Ascending aorta (tissue), 2 donors: ENCODE measurements at regions of chr7 and their contacts with region 1.

Region 1: GRCh38 chr7:113698556-113699220 is 220.1 kb downstream of the PPP1R3A start:
- DNase-seq: no peak
- H3K4me3 ChIP-seq: no peak overlapping the region
- H3K27ac ChIP-seq: no peak overlapping the region
- H3K4me1 ChIP-seq: no peaks in the 10 kb centered on the region
- H3K27me3 ChIP-seq: no peaks in the 10 kb centered on the region
- CTCF ChIP-seq: peak; percentile 26 to 75 (median 70)

Region 2: GRCh38 chr7:113015032-113015645 is 683.5 kb before region 1 on chr7:
- intact Hi-C with region 1: loop called (anchors 5 kb)
- DNase-seq: no peak
- H3K4me3 ChIP-seq: no peak overlapping the region
- H3K27ac ChIP-seq: no peak overlapping the region
- H3K4me1 ChIP-seq: no peaks in the 10 kb centered on the region
- H3K27me3 ChIP-seq: no peaks in the 10 kb centered on the region
- CTCF ChIP-seq: peak; percentile 5 to 34 (median 23)

Region 3: DNA sequence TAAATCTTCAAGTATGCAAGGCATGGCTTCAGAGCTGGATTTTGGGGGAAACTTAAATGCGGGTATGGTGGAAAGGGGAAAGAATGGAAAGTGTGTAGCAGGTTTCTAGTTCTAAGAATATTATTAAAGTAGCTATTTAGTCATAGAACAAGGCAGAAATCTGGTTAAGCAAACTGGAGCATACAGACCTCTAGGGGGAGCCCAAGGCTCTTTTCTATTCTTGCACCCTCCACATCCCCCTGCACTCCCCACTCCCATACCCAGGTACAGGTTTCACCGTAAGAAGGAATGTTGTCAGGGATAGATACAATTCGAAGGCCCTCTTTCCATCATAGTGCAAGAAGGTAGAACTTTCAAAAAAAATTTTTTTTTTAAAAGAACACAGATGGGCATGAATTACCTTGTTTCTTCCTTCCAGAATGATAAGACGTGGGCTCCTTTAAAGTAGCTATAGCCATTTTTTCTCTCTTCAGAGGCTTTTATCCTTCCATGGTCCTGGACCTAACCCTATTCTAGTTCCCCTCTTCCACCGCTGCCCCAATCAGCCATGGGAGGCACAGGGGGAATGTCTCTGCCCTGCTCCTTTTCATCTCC is 538.8 kb before region 1 on chr7:
- intact Hi-C with region 1: loop called (anchors 10 kb)
- DNase-seq: no peak
- H3K4me3 ChIP-seq: no peak overlapping the region
- H3K27ac ChIP-seq: no peak overlapping the region
- H3K4me1 ChIP-seq: no peaks in the 10 kb centered on the region
- H3K27me3 ChIP-seq: no peaks in the 10 kb centered on the region
- CTCF ChIP-seq: peak in 2 of 3 experiments; percentile 26 to 34

Region 4: DNA sequence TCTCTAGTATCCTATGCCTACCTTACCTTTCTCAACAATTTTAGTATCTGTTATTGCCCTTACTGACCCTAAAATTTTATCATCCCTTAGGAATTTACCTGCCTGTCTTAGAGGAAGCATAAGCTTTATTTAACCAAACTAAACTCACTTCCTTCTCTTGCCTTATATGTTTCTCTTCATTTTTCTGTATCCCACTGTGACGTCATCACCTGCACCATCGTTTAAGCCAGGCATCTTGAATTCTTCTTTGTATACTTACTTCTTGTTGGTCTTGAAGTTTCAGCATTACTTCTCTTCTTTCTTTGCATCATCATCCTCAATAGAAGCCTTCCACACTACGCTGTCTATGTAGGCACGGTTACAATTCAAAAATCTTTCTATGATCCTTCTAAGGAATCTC is 349.3 kb before region 1 on chr7:
- intact Hi-C with region 1: no loop called
- DNase-seq: no peak
- H3K4me3 ChIP-seq: no peak overlapping the region
- H3K27ac ChIP-seq: no peak overlapping the region
- H3K4me1 ChIP-seq: no peaks in the 10 kb centered on the region
- H3K27me3 ChIP-seq: no peaks in the 10 kb centered on the region
- CTCF ChIP-seq: no peak